Head of caudate nucleus (tissue), 42 donors: ENCODE measurements at regions of chr6 and their contacts with region 1.

Region 1: GRCh38 chr6:128743974-128744765 is 138.8 kb upstream of the LAMA2 start:
- DNase-seq: no peak

Region 2: GRCh38 chr6:127855542-127856159 is 888.5 kb before region 1 on chr6:
- intact Hi-C with region 1: loop called (anchors 10 kb)
- DNase-seq: peak in 35 of 42 donors; percentile 3 to 87 (median 55)

Region 3: GRCh38 chr6:129635396-129636130 is 891.4 kb after region 1 on chr6:
- intact Hi-C with region 1: no loop called
- DNase-seq: no peak